ENCODE measurements at regions of chr4 and their contacts with region 1.

Region 1: DNA sequence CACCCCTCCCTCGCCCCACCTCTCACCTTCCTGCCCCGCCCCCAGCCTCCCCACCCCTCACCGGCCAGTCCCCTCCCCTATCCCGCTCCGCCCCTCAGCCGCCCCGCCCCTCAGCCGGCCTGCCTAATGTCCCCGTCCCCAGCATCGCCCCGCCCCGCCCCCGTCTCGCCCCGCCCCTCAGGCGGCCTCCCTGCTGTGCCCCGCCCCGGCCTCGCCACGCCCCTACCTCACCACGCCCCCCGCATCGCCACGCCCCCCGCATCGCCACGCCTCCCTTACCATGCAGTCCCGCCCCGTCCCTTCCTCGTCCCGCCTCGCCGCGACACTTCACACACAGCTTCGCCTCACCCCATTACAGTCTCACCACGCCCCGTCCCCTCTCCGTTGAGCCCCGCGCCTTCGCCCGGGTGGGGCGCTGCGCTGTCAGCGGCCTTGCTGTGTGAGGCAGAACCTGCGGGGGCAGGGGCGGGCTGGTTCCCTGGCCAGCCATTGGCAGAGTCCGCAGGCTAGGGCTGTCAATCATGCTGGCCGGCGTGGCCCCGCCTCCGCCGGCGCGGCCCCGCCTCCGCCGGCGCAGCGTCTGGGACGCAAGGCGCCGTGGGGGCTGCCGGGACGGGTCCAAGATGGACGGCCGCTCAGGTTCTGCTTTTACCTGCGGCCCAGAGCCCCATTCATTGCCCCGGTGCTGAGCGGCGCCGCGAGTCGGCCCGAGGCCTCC is at the starts of genes HTT and HTT-AS:
- DNase-seq: peak; percentile 91 to 99 (median 96)
- ATAC-seq: peak; percentile 90
- H3K4me3 ChIP-seq: peak within 1 kb of the TSS; percentile 87
- H3K4me3 Mint-ChIP-seq: peak within 1 kb of the TSS; percentile 86 to 98 (median 90)
- H3K27ac ChIP-seq: peak within 1 kb of the TSS; percentile 89
- H3K27ac Mint-ChIP-seq: peak within 1 kb of the TSS; percentile 70 to 95 (median 93)
- H3K4me1 ChIP-seq: peaks cover 10 to 16% of the 10 kb centered on the region in 2 donors
- H3K4me1 Mint-ChIP-seq: peaks cover 17 to 35% (median 30%) of the 10 kb centered on the region in 7 donors
- H3K27me3 ChIP-seq: no peaks in the 10 kb centered on the region
- H3K27me3 Mint-ChIP-seq: no peaks in the 10 kb centered on the region
- total RNA-seq, gene HTT: 61.4 to 115 (median 72.5) TPM
- total RNA-seq, gene HTT-AS: not detected

Region 2: GRCh38 chr4:1792832-1793495 is 1281.3 kb before region 1 on chr4 and contains the start of gene FGFR3:
- CTCF ChIA-PET with region 1: no interaction called
- POLR2A ChIA-PET with region 1: no interaction called
- intact Hi-C with region 1: loop called in 1 of 2 experiments (anchors 5 kb)
- DNase-seq: peak in 3 of 9 donors; percentile 16 to 71 (median 31)
- ATAC-seq: peak; percentile 90
- H3K4me3 ChIP-seq: no peak within 1 kb of the TSS
- H3K4me3 Mint-ChIP-seq: peak within 1 kb of the TSS in 8 of 10 donors; percentile 34 to 72 (median 46)
- H3K27ac ChIP-seq: no peak within 1 kb of the TSS
- H3K27ac Mint-ChIP-seq: peak within 1 kb of the TSS in 1 of 9 donors; percentile 56
- H3K4me1 ChIP-seq: peaks cover 0 to 5% of the 10 kb centered on the region in 2 donors
- H3K4me1 Mint-ChIP-seq: peaks cover 0 to 1% (median 0%) of the 10 kb centered on the region in 7 donors
- H3K27me3 ChIP-seq: peaks cover 0 to 12% of the 10 kb centered on the region in 2 donors
- H3K27me3 Mint-ChIP-seq: peaks cover 9 to 28% (median 11%) of the 10 kb centered on the region in 5 donors
- total RNA-seq, gene FGFR3: 1.0 TPM in 1 of 5 experiments, not detected in the others

Region 3: GRCh38 chr4:2468445-2469192 is 605.6 kb before region 1 on chr4 and contains the start of gene RNF4:
- CTCF ChIA-PET with region 1: no interaction called
- POLR2A ChIA-PET with region 1: no interaction called
- intact Hi-C with region 1: loop called in 1 of 2 experiments (anchors 1 kb)
- DNase-seq: peak; percentile 77 to 97 (median 96)
- ATAC-seq: peak; percentile 93
- H3K4me3 ChIP-seq: peak within 1 kb of the TSS; percentile 70
- H3K4me3 Mint-ChIP-seq: peak within 1 kb of the TSS; percentile 90 to 98 (median 95)
- H3K27ac ChIP-seq: peak within 1 kb of the TSS; percentile 94
- H3K27ac Mint-ChIP-seq: peak within 1 kb of the TSS; percentile 95 to 98 (median 98)
- H3K4me1 ChIP-seq: peaks cover 31 to 37% of the 10 kb centered on the region in 2 donors
- H3K4me1 Mint-ChIP-seq: peaks cover 40 to 66% (median 53%) of the 10 kb centered on the region in 7 donors
- H3K27me3 ChIP-seq: no peaks in the 10 kb centered on the region
- H3K27me3 Mint-ChIP-seq: peaks cover 0 to 6% (median 0%) of the 10 kb centered on the region in 5 donors
- total RNA-seq, gene RNF4: 80.7 to 101 (median 91.8) TPM

Region 4: DNA sequence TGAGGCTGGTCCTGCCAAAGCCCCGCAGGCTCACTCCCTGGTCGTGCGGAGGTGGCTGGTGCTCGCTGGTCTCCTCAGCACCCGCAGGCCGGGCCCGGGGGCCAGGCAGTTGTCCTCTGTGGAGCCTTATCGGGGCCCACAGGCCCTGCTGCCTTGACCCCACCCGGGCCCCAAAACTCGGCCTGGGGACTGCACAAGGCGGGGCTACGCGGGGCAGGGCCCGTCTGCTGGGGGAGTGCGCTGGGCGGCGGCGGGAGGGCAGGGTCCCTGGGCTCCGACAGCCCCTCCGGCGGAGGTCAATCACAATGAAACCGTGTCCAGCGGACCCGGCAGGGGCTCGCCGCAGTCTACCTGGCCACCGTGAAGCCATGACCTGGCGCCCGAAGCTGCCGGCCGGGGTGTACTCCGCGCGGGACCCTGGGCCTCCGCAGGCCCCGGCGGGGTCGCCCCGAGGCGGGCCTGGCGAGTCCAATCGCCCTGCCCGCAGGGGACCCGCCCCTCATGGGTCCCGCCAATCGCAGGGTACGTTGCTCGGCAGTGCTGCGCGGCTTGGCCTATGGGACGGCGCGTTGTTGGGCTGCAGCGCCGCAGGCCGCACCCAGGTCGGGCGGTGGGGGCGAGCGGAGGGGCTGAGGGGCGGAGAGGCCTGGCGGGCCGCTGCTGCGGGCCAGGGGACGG is 230.8 kb before region 1 on chr4 and contains the start of gene ADD1:
- CTCF ChIA-PET with region 1: no interaction called
- POLR2A ChIA-PET with region 1: no interaction called
- intact Hi-C with region 1: loop called in 1 of 2 experiments (anchors 10 kb)
- DNase-seq: peak; percentile 84 to 100 (median 94)
- ATAC-seq: peak; percentile 98
- H3K4me3 ChIP-seq: peak within 1 kb of the TSS; percentile 80
- H3K4me3 Mint-ChIP-seq: peak within 1 kb of the TSS; percentile 87 to 100 (median 92)
- H3K27ac ChIP-seq: peak within 1 kb of the TSS; percentile 95
- H3K27ac Mint-ChIP-seq: peak within 1 kb of the TSS; percentile 85 to 97 (median 93)
- H3K4me1 ChIP-seq: peaks cover 33 to 40% of the 10 kb centered on the region in 2 donors
- H3K4me1 Mint-ChIP-seq: peaks cover 39 to 75% (median 59%) of the 10 kb centered on the region in 7 donors
- H3K27me3 ChIP-seq: no peaks in the 10 kb centered on the region
- H3K27me3 Mint-ChIP-seq: no peaks in the 10 kb centered on the region
- total RNA-seq, gene ADD1: 211 to 300 (median 282) TPM

Region 5: DNA sequence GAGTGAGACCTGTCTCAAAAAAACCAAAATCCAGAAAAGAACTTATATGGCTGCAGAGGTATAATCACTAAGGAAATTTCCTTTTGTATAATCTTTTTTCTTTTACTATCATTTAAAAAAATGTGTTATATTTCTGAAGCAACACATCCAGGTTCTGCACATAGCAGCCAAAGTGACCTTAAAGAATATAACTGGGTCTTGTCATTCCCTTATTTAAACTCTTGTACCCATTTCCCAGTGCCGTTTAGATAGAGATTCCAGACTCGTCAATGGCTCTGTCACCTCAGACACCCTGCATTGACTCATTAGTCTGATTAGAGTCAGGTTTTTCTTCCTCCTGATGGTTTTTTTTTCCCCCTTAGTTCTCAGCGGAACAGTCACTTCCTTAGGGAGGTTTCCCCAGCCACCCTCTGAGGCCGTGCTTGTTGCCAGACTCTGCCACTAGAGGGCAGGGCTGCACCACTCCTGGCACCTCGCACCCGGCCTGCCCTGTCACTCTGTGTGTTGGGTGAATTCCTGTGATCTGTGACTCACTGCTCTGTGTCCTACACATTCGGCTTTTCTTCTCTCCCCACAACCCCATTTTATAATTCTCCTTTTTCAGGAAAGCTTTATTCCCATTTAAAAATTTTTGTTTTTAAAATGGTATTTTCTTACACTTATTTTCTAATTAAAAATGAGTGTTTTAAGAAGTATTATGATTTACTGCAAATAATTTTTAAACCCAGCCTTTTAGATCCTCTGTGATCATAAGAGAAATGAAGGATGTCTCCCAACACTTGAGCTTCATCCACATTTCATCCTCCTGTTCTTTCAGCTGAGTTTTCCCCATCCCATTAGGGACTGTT is 32.3 kb after region 1 on chr4:
- CTCF ChIA-PET with region 1: interaction called, 3 read pairs
- POLR2A ChIA-PET with region 1: no interaction called
- intact Hi-C with region 1: loop called in 1 of 2 experiments (anchors 1 kb)
- DNase-seq: peak; percentile 43 to 91 (median 69)
- ATAC-seq: peak; percentile 100
- H3K4me3 ChIP-seq: no peak overlapping the region
- H3K4me3 Mint-ChIP-seq: no peak overlapping the region
- H3K27ac ChIP-seq: no peak overlapping the region
- H3K27ac Mint-ChIP-seq: peak overlapping the region in 4 of 9 donors; percentile 38 to 77 (median 56)
- H3K4me1 ChIP-seq: no peaks in the 10 kb centered on the region
- H3K4me1 Mint-ChIP-seq: peaks cover 5 to 19% (median 10%) of the 10 kb centered on the region in 7 donors
- H3K27me3 ChIP-seq: no peaks in the 10 kb centered on the region
- H3K27me3 Mint-ChIP-seq: no peaks in the 10 kb centered on the region

Region 6: DNA sequence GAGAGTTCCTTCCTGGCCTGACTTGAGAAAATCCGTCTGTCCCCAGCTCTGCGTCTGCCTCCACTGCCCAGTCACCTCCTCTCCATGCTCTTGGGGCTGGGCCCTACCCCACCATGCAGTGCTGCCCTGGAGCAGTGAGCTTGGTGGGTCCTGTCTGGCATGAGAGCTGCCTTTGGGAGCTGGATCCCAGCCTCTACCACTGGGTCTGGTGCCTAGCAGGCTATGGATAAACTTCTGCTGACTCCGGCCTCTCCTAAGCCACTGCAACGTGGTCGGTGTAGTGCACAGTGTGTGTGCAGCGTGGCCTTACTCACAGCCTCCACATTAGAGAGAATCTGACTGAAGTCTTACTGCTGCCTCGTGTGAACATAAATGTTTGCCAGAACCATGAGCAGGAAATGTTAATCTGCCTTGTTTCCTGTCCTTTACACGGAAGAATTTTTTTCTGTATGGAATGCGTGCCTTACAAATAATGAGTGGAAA is 47.9 kb after region 1 on chr4:
- CTCF ChIA-PET with region 1: no interaction called
- POLR2A ChIA-PET with region 1: no interaction called
- intact Hi-C with region 1: no loop called
- DNase-seq: peak in 1 of 9 donors; percentile 2
- ATAC-seq: peak; percentile 20
- H3K4me3 ChIP-seq: no peak overlapping the region
- H3K4me3 Mint-ChIP-seq: peak overlapping the region in 9 of 10 donors; percentile 19 to 67 (median 51)
- H3K27ac ChIP-seq: peak overlapping the region; percentile 53
- H3K27ac Mint-ChIP-seq: peak overlapping the region; percentile 65 to 90 (median 76)
- H3K4me1 ChIP-seq: peaks cover 0 to 6% of the 10 kb centered on the region in 2 donors
- H3K4me1 Mint-ChIP-seq: peaks cover 5 to 27% (median 19%) of the 10 kb centered on the region in 7 donors
- H3K27me3 ChIP-seq: no peaks in the 10 kb centered on the region
- H3K27me3 Mint-ChIP-seq: no peaks in the 10 kb centered on the region